ENCODE measurements at regions of chr9 and their contacts with region 1.

Region 1: GRCh38 chr9:129796029-129796910 is 6.7 kb upstream of the TOR1B start:
- DNase-seq: no peak

Region 2: GRCh38 chr9:129726322-129727160 is 69.7 kb before region 1 on chr9:
- intact Hi-C with region 1: no loop called
- DNase-seq: peak; percentile 93

Region 3: DNA sequence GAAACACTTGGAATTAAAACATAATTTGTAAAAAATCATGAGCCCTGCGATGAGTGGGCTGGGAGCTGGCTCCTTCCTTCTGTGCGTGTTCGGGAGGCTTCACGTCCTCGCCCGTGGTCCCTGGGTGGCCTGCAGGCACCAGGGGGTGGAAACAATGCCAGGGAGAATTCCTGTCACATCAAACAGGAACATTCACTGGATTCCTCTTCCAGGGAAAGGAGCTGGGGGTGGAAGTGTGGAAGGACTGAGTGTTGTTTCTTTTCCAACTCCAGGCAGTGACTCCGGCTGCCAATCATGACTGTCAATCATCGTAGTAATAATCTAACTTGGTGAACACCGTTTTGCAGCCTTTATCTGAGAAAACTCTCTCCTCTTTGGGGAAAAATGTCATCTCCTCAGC is 17.4 kb after region 1 on chr9:
- intact Hi-C with region 1: loop called in 1 of 2 experiments (anchors 1 kb)
- DNase-seq: no peak

Measured in posterior vena cava (tissue), 2 donors.